ENCODE measurements at regions of chr16 and their contacts with region 1.

Region 1: GRCh38 chr16:81444448-81445121 is at the start of gene CMIP:
- DNase-seq: peak; percentile 58 to 89 (median 72)
- H3K4me3 ChIP-seq: peak within 1 kb of the TSS; percentile 57 to 90 (median 79)
- H3K27ac ChIP-seq: peak within 1 kb of the TSS; percentile 27 to 94 (median 82)
- H3K27me3 ChIP-seq: no peaks in the 10 kb centered on the region
- CTCF ChIP-seq: no peak
- total RNA-seq, gene CMIP: 104 to 216 (median 159) TPM

Region 2: DNA sequence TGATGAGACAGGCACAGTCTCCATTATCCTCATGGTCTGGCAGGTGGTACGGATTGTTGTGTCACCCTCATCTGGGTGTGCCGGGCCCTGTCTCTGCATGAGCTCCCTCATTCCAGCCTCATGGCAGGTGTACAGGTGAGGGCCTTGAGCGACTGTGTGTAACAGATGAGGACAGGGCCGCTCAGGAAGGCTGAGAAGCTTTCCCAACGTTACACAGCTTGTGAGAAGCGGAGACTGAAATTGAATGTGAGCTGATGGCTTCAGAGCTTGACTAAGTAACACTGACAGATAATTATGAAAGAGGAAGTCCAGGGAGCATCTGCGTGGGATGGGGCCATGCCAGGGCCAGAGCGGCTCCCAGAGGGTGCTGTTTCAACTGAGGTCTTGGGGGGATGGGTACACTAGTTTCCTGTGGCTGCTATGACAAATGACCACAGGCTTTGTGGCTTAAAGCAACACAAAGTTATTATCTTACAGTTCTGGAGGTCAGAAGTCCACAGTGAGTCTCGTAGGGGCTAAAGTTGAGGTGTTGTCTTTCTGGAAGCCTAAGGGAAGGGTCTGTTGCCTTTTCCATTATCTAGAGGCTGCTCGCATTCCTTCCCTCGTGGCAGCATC is 36.7 kb after region 1 on chr16:
- intact Hi-C with region 1: no loop called
- DNase-seq: peak in 1 of 10 donors; percentile 47
- H3K4me3 ChIP-seq: no peak overlapping the region
- H3K27ac ChIP-seq: peak overlapping the region in 32 of 59 donors; percentile 7 to 72 (median 52)
- H3K27me3 ChIP-seq: no peaks in the 10 kb centered on the region
- CTCF ChIP-seq: no peak

Region 3: DNA sequence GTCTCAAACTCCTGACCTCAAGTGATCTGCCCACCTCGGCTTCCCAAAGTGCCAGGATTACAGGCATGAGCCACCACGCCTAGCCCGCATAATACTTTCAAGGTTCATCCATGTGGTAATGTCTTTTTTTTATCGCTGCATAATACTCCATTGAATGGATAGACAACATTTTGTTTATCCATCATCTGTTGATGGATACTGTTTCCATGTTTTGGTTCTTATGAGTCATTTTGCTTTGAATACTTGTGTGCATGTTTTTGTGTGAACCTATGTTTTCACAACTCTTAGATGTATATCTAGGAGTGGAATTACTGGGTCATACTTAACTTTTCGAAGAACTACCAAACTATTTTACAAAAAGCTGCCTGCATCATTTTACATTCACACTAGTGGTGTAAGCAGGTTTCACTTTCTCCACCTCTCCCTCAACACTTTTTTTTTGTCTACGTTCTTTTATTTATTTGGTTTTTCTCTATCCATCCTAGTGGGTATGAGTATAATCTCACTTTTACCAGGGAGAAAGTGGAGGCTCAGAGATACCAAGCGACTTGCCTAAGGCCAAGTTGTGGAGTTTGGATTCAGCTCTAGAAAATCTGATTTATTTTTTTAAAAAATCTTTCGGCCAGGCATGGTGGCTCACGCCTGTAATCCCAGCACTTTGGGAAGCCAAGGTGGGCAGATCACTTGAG is 151.2 kb after region 1 on chr16:
- intact Hi-C with region 1: no loop called
- DNase-seq: no peak
- H3K4me3 ChIP-seq: no peak overlapping the region
- H3K27ac ChIP-seq: no peak overlapping the region
- H3K27me3 ChIP-seq: no peaks in the 10 kb centered on the region
- CTCF ChIP-seq: no peak

Region 4: GRCh38 chr16:81616321-81617055 is 171.9 kb after region 1 on chr16:
- intact Hi-C with region 1: loop called in 1 of 2 experiments (anchors 5 kb)
- DNase-seq: peak in 8 of 10 donors; percentile 46 to 78 (median 66)
- H3K4me3 ChIP-seq: peak overlapping the region in 1 of 59 donors; percentile 12
- H3K27ac ChIP-seq: peak overlapping the region in 48 of 59 donors; percentile 0 to 89 (median 63)
- H3K27me3 ChIP-seq: no peaks in the 10 kb centered on the region
- CTCF ChIP-seq: no peak